ENCODE measurements at regions of chr5 and their contacts with region 1.

Region 1: GRCh38 chr5:96752341-96753016 is 55.3 kb downstream of the ERAP1 start:
- DNase-seq: no peak
- ATAC-seq: no peak
- H3K4me3 Mint-ChIP-seq: no peak overlapping the region
- H3K27ac Mint-ChIP-seq: no peak overlapping the region
- H3K4me1 Mint-ChIP-seq: no peaks in the 10 kb centered on the region
- H3K27me3 Mint-ChIP-seq: no peaks in the 10 kb centered on the region

Region 2: GRCh38 chr5:96614110-96614691 is 138.3 kb before region 1 on chr5:
- CTCF ChIA-PET with region 1: interaction called, 23 read pairs
- DNase-seq: peak; percentile 63
- ATAC-seq: peak; percentile 70
- H3K4me3 Mint-ChIP-seq: no peak overlapping the region
- H3K27ac Mint-ChIP-seq: no peak overlapping the region
- H3K4me1 Mint-ChIP-seq: peaks cover 7% of the 10 kb centered on the region
- H3K27me3 Mint-ChIP-seq: peaks cover 37% of the 10 kb centered on the region

Region 3: DNA sequence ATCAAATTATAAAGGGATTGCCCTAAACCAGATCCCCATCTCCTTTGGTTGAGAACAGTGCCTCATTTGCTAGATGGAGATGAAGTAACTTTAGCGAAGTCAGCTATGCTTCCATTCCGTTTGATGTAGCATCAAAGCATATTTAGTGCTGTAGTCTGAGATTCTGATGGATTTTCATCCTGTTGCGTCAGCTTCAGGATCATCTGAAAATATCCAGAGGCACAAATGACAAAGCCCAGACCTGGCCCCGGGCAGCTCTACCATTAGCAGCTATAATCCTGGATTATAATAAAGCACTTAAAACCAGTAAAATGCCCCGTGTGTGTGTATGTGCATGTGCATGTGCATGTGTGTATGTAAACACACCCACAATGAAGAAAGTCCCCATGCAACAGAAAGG is 10.5 kb after region 1 on chr5:
- CTCF ChIA-PET with region 1: interaction called, 26 read pairs
- DNase-seq: no peak
- ATAC-seq: no peak
- H3K4me3 Mint-ChIP-seq: no peak overlapping the region
- H3K27ac Mint-ChIP-seq: no peak overlapping the region
- H3K4me1 Mint-ChIP-seq: no peaks in the 10 kb centered on the region
- H3K27me3 Mint-ChIP-seq: no peaks in the 10 kb centered on the region

Region 4: DNA sequence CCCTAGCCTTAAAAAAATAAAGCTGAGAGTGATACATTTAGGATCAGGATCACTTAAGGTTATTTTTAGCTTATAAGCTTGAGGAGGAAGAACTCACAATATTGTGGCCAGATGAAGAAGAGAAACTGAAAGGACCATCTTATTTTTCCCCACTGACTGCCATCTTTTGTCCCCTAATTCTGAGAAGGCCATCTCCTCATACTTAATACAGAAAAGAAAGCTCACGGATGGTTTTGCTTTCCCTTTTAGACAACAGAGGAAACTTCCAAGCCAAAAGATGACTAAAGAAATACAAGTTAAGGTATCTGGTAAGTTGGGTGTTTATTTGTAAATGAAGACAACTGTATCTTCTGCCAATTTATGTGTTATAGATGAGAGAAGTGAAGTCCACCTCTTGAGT is 18.9 kb after region 1 on chr5:
- CTCF ChIA-PET with region 1: interaction called, 22 read pairs
- DNase-seq: no peak
- ATAC-seq: peak; percentile 87
- H3K4me3 Mint-ChIP-seq: peak overlapping the region; percentile 64
- H3K27ac Mint-ChIP-seq: peak overlapping the region; percentile 89
- H3K4me1 Mint-ChIP-seq: peaks cover 10% of the 10 kb centered on the region
- H3K27me3 Mint-ChIP-seq: no peaks in the 10 kb centered on the region

Region 5: GRCh38 chr5:96790961-96791504 is 38.6 kb after region 1 on chr5:
- CTCF ChIA-PET with region 1: interaction called, 10 read pairs
- DNase-seq: no peak
- ATAC-seq: no peak
- H3K4me3 Mint-ChIP-seq: no peak overlapping the region
- H3K27ac Mint-ChIP-seq: peak overlapping the region; percentile 31
- H3K4me1 Mint-ChIP-seq: peaks cover 24% of the 10 kb centered on the region
- H3K27me3 Mint-ChIP-seq: no peaks in the 10 kb centered on the region

Region 6: DNA sequence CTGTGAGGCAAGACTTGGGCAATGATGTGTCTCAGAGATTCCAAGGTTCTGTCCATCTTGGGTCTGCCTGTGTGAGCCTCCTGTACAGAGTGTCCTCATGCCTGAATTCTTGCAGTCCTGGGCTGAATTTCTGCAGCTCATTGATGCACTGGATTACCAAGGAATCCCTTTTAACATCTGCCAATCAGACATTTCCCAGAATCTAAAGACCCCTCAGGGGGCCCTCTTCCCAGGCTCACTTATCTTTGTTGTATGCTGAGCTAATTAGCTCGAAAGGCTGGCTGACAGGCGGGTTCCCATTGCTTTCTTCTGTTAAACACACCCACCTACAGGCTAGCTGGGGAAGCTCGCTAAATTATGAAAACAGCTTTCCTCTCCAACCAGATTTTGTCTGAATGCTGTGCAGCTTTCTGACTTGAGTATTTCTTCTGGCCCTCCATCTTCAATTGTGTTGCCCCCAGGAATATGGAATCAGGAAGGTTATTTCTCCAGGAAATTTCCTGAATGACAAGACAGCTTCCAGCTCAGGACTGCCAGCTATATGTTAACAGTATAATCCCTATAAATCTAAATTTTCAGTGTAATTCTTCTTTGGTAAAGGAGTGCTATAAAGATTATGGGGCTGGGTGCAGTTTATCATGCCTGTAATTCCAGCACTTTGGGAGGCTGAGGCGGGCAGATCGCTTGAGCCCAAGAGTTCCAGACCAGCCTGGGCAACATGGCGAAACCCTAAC is 390.2 kb after region 1 on chr5 and contains the start of gene LIX1:
- CTCF ChIA-PET with region 1: interaction called, 29 read pairs
- DNase-seq: peak; percentile 62
- ATAC-seq: peak; percentile 87
- H3K4me3 Mint-ChIP-seq: no peak within 1 kb of the TSS
- H3K27ac Mint-ChIP-seq: no peak within 1 kb of the TSS
- H3K4me1 Mint-ChIP-seq: no peaks in the 10 kb centered on the region
- H3K27me3 Mint-ChIP-seq: peaks cover 24% of the 10 kb centered on the region
- total RNA-seq, gene LIX1: not detected

Region 7: GRCh38 chr5:97162045-97162444 is 409.6 kb after region 1 on chr5:
- CTCF ChIA-PET with region 1: interaction called, 79 read pairs
- DNase-seq: peak; percentile 64
- ATAC-seq: peak; percentile 61
- H3K4me3 Mint-ChIP-seq: no peak overlapping the region
- H3K27ac Mint-ChIP-seq: no peak overlapping the region
- H3K4me1 Mint-ChIP-seq: peaks cover 20% of the 10 kb centered on the region
- H3K27me3 Mint-ChIP-seq: no peaks in the 10 kb centered on the region